ENCODE measurements at regions of chr3 and their contacts with region 1.

Region 1: GRCh38 chr3:148991194-148992026 is at the start of gene GYG1:
- DNase-seq: peak; percentile 88
- H3K4me3 ChIP-seq: peak within 1 kb of the TSS; percentile 81
- H3K27ac ChIP-seq: peak within 1 kb of the TSS; percentile 50
- H3K4me1 ChIP-seq: peaks cover 20% of the 10 kb centered on the region
- CTCF ChIP-seq: peak; percentile 80
- total RNA-seq, gene GYG1: 9.6 and 11.5 TPM in 2 replicates

Region 2: GRCh38 chr3:149010504-149010951 is 19.1 kb after region 1 on chr3:
- CTCF ChIA-PET with region 1: no interaction called
- POLR2A ChIA-PET with region 1: no interaction called
- intact Hi-C with region 1: no loop called
- DNase-seq: no peak
- H3K4me3 ChIP-seq: no peak overlapping the region
- H3K27ac ChIP-seq: no peak overlapping the region
- H3K4me1 ChIP-seq: no peaks in the 10 kb centered on the region
- CTCF ChIP-seq: no peak

Region 3: DNA sequence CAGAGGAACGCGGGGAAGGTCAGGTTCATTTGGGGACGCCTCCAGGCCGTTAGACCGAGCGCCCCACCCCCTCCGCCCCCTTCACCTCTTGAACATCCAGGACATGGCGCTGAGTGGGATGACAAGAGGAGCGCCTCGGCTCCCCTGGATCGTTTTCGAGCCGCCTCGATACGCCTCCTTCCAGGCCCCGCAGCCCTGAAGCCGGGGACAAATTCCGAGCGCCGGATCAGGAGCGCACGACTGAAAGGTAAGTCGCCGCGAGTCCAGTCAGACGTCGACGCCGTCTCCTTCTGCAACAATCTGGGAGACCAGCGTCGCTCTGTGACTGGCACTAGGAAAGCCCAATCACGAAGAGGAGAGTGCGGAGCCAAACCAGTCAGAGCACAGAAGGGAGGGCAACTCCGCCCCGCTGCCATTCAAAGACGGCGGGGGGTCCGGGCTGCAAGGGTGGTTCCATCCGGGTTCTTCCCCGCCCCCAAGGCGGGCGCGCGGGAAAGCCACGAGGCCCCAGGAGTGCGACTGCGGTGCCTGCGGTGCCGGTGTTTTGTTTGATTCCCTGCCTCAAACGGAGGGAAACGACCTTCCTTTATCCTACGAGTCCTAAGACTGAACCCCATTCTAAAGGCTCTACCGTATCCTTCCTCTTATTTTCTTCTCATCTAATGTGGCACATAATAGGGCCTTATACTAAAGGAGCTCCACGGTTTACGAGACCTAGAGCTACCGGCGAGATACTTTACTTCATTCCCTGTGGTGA is 95.0 kb after region 1 on chr3 and contains the start of gene HLTF:
- CTCF ChIA-PET with region 1: no interaction called
- POLR2A ChIA-PET with region 1: interaction called, 8 read pairs
- intact Hi-C with region 1: loop called (anchors 2 kb)
- DNase-seq: peak; percentile 98
- H3K4me3 ChIP-seq: peak within 1 kb of the TSS; percentile 95
- H3K27ac ChIP-seq: peak within 1 kb of the TSS; percentile 72
- H3K4me1 ChIP-seq: peaks cover 71% of the 10 kb centered on the region
- CTCF ChIP-seq: no peak
- total RNA-seq, gene HLTF: 97.5 and 106 TPM in 2 replicates

Region 4: GRCh38 chr3:149273096-149273751 is 281.8 kb after region 1 on chr3:
- CTCF ChIA-PET with region 1: interaction called, 3 read pairs
- POLR2A ChIA-PET with region 1: interaction called, 3 read pairs
- intact Hi-C with region 1: loop called (anchors 1 kb)
- DNase-seq: peak; percentile 86
- H3K4me3 ChIP-seq: no peak overlapping the region
- H3K27ac ChIP-seq: no peak overlapping the region
- H3K4me1 ChIP-seq: peaks cover 17% of the 10 kb centered on the region
- CTCF ChIP-seq: peak; percentile 100

Region 5: GRCh38 chr3:149283426-149283825 is 292.0 kb after region 1 on chr3:
- CTCF ChIA-PET with region 1: no interaction called
- POLR2A ChIA-PET with region 1: no interaction called
- intact Hi-C with region 1: no loop called
- DNase-seq: no peak
- H3K4me3 ChIP-seq: no peak overlapping the region
- H3K27ac ChIP-seq: no peak overlapping the region
- H3K4me1 ChIP-seq: peaks cover 4% of the 10 kb centered on the region
- CTCF ChIP-seq: no peak